ENCODE measurements at regions of chr10 and their contacts with region 1.

Region 1: GRCh38 chr10:22682237-22683139 is 31.9 kb downstream of the PIP4K2A start:
- DNase-seq: peak; percentile 63
- H3K4me3 Mint-ChIP-seq: peak overlapping the region; percentile 76
- H3K27ac Mint-ChIP-seq: peak overlapping the region; percentile 99
- H3K4me1 Mint-ChIP-seq: peaks cover 87% of the 10 kb centered on the region
- H3K27me3 Mint-ChIP-seq: no peaks in the 10 kb centered on the region

Region 2: GRCh38 chr10:22308390-22308789 is 374.1 kb before region 1 on chr10:
- intact Hi-C with region 1: loop called (anchors 1 kb)
- DNase-seq: peak; percentile 41
- H3K4me3 Mint-ChIP-seq: no peak overlapping the region
- H3K27ac Mint-ChIP-seq: peak overlapping the region; percentile 71
- H3K4me1 Mint-ChIP-seq: peaks cover 29% of the 10 kb centered on the region
- H3K27me3 Mint-ChIP-seq: peaks cover 1% of the 10 kb centered on the region

Region 3: GRCh38 chr10:22436884-22437619 is 245.4 kb before region 1 on chr10:
- intact Hi-C with region 1: loop called (anchors 10 kb)
- DNase-seq: peak; percentile 80
- H3K4me3 Mint-ChIP-seq: peak overlapping the region; percentile 91
- H3K27ac Mint-ChIP-seq: peak overlapping the region; percentile 96
- H3K4me1 Mint-ChIP-seq: peaks cover 49% of the 10 kb centered on the region
- H3K27me3 Mint-ChIP-seq: peaks cover 9% of the 10 kb centered on the region

Region 4: DNA sequence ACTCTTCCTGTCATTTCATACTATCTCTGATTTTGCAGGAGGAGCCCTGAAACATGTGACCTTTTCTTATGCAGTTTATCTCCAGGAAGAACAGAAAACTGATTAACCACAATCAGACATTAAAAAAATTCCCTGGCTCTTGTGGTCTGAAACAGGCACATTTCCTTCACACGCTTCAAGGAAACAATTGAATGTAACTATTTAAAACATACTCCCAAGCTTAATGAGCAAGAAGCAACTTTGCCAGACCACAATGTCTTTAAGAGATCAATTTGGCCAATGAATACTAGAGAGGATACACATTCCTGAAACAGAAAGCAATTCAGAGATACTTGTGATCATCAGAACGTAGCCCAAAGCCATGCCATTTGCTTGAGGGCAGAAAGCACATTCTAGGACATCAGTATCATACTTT is 33.9 kb before region 1 on chr10:
- intact Hi-C with region 1: loop called (anchors 5 kb)
- DNase-seq: no peak
- H3K4me3 Mint-ChIP-seq: peak overlapping the region; percentile 75
- H3K27ac Mint-ChIP-seq: peak overlapping the region; percentile 96
- H3K4me1 Mint-ChIP-seq: peaks cover 91% of the 10 kb centered on the region
- H3K27me3 Mint-ChIP-seq: no peaks in the 10 kb centered on the region

Region 5: DNA sequence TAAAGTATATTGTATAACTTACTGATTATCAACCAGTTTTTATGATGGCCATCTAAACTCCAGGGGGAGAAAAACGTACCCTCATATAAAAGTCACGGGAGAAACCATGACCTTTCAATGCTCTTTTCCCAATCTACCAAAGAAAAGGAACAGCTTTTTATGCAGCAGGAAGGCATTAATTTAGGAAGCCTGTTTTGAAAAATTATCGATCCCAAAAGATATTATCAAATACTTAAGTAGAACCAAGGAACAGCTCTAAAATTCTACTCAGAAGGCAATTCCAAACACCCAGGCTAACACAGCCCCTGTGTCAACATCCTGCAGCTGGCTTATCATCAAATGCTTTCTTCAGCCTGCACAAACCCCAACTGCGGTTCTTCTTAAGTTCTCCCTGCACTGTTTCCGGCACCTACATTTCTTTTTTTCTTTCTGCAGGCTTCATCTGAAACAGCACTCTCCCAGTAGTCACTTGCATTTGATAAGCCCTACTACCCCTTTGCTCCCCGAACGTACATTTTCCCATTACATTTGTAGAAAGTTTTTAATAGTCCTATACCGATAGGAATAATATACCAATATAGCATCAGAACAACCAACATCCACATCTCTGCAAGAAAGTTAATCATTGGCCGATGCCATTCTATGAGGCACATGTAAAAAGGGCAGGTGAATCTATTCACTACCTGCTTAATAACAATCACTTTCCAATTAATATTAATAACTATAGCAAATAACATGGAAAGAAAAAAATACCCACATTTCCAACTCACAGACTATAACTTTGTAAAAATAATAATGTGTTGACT is 16.0 kb before region 1 on chr10:
- intact Hi-C with region 1: loop called (anchors 1 kb)
- DNase-seq: peak; percentile 57
- H3K4me3 Mint-ChIP-seq: peak overlapping the region; percentile 74
- H3K27ac Mint-ChIP-seq: peak overlapping the region; percentile 85
- H3K4me1 Mint-ChIP-seq: peaks cover 66% of the 10 kb centered on the region
- H3K27me3 Mint-ChIP-seq: no peaks in the 10 kb centered on the region

Region 6: GRCh38 chr10:22816298-22816653 is 133.8 kb after region 1 on chr10:
- intact Hi-C with region 1: no loop called
- DNase-seq: no peak
- H3K4me3 Mint-ChIP-seq: no peak overlapping the region
- H3K27ac Mint-ChIP-seq: no peak overlapping the region
- H3K4me1 Mint-ChIP-seq: peaks cover 10% of the 10 kb centered on the region
- H3K27me3 Mint-ChIP-seq: peaks cover 10% of the 10 kb centered on the region